ENCODE measurements at regions of chr17 and their contacts with region 1.

Region 1: DNA sequence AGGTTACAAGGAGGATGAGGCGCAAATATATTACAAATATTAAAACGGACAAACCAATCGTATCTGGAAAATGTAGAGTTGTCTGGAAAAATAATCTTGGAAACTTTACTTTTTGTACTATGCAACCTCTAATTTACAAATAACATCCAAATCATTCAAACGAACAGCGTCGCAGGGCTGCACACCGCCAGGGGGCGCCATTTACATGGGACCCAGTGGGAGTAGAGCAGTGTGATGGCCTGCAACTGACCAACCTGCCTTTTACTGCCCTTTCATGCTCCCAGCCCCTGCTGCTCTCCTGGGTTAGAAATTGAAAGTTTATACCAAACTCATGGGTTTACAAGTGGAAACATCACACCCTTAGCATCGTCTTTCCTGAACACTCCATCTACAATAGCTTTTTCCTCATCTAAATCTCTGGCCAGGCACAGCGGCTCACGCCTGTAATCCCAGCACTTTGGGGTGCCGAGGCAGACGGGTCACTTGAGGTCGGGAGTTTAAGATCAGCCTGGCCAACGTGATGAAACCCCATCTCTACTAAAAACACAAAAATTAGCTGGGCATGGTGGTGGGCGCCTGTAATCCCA is 10.0 kb downstream of the PITPNC1 start:
- DNase-seq: no peak
- H3K4me3 ChIP-seq: no peak overlapping the region
- H3K27ac ChIP-seq: no peak overlapping the region
- H3K4me1 ChIP-seq: peaks cover 24 to 45% (median 31%) of the 10 kb centered on the region in 4 donors
- H3K27me3 ChIP-seq: no peaks in the 10 kb centered on the region
- CTCF ChIP-seq: peak; percentile 52 to 69 (median 64)
- EP300 ChIP-seq: no peak
- POLR2A ChIP-seq: no peak

Region 2: DNA sequence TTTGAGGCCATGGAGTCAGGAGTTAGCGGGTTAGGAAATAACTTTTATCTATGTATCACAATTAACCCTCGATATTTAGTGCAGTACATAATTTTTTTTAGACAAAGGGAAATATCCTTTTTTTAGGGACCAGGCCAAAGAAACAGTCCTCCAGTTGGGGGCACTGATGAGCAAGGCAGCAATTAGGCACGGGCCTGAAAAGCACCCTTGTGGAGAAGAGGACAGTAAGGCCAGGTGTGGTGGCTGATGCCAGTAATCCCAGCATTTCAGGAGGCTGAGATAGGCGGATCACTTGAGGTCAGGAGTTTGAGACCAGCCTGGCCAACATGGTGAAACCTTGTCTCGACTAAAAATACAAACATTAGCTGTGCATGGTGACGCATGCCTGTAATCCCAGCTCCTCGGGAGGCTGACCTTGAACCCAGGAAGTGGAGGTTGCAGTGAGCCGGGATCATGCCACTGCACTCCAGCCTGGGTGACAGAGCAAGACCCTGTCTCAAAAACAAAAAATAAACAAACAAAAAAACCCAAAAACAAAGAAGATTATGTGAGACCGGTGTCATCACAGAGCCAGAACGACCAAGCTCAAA is 172.4 kb after region 1 on chr17:
- intact Hi-C with region 1: no loop called
- DNase-seq: no peak
- H3K4me3 ChIP-seq: no peak overlapping the region
- H3K27ac ChIP-seq: peak overlapping the region in 1 of 4 donors; percentile 14
- H3K4me1 ChIP-seq: peaks cover 6 to 16% (median 12%) of the 10 kb centered on the region in 4 donors
- H3K27me3 ChIP-seq: no peaks in the 10 kb centered on the region
- CTCF ChIP-seq: peak in 1 of 3 experiments; percentile 29
- EP300 ChIP-seq: no peak
- POLR2A ChIP-seq: no peak

Region 3: GRCh38 chr17:67602956-67603355 is 215.9 kb after region 1 on chr17:
- intact Hi-C with region 1: loop called (anchors 10 kb)
- DNase-seq: no peak
- H3K4me3 ChIP-seq: no peak overlapping the region
- H3K27ac ChIP-seq: no peak overlapping the region
- H3K4me1 ChIP-seq: peaks cover 29 to 39% (median 31%) of the 10 kb centered on the region in 4 donors
- H3K27me3 ChIP-seq: no peaks in the 10 kb centered on the region
- CTCF ChIP-seq: peak; percentile 30 to 47 (median 41)
- EP300 ChIP-seq: no peak
- POLR2A ChIP-seq: no peak